ENCODE measurements at regions of chr20 and their contacts with region 1.

Region 1: GRCh38 chr20:38221119-38221589 is 39.4 kb downstream of the KIAA1755 start:
- DNase-seq: peak; percentile 88
- CTCF ChIP-seq: peak; percentile 91

Region 2: GRCh38 chr20:37901654-37902503 is 319.3 kb before region 1 on chr20:
- CTCF ChIA-PET with region 1: interaction called, 12 read pairs
- POLR2A ChIA-PET with region 1: no interaction called
- DNase-seq: peak; percentile 83
- CTCF ChIP-seq: peak; percentile 41

Region 3: DNA sequence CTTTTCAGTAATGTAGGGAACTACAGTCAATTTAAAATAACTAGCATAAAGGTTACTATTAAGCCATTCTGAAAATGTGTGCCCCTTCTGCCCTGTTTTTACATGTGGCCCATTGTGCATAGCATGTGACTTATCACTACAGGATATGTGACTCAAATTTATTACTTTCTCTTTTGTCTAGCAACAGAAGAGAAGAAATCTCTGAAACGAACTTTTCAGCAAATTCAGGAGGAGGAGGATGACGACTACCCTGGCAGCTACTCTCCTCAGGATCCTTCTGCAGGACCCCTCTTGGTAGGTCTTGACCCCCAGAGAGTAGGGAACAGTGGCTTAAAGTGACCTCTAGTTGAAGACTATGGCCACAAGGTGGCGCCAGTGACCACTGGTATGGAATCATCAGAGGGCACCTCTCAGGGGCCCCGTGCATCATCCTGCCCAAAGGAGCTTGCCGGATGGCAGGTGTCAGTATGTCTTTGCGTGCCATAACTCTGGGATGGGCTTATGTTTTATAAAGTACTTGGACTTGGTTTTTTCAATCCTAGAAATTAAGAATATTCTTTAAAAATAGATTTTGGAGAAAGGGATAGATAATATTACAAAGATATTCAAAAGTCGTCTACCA is 163.7 kb before region 1 on chr20:
- CTCF ChIA-PET with region 1: interaction called, 302 read pairs
- POLR2A ChIA-PET with region 1: interaction called, 3 read pairs
- DNase-seq: peak; percentile 74
- CTCF ChIP-seq: peak; percentile 79

Region 4: DNA sequence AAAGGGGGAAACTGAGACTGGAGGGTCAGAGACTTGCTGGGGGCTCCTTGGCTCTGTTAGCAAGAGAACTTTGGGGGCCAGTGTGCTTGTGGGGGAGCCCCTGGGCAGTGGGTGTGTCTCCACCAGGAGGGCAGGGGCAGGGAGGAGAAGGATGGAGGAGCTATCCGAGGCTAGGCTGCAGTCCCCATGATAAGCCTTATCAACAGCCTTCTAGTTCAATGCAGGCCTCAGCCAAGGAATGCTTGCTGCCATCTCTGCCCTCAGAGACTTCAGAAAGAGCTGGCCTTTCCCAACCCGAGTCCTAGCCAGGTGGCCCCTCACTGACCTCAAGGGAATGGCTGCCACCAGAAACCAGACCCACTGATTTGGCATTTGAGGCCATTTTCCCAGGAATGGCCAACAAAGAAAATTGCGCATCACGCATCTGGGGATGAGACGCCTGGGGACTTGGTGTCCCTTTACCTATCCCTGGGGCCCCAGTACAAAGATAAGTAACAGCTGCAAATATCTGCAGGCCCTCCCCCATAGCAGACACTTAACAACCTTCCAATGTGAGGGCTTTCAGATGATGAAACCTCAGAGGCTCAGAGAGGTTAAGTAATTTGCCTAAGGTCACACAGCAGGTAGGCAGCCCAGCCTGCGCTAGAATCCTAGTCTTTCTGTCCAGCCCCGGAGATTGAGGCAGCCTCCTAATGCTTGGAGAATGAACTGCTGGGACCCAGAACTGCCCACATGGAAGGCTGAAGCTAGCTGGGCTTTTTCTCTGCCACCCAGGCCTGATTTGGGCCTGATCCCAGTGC is 61.0 kb before region 1 on chr20:
- CTCF ChIA-PET with region 1: interaction called, 11 read pairs
- POLR2A ChIA-PET with region 1: no interaction called
- DNase-seq: no peak
- CTCF ChIP-seq: no peak

Region 5: GRCh38 chr20:38181207-38181693 is 39.9 kb before region 1 on chr20:
- CTCF ChIA-PET with region 1: interaction called, 26 read pairs
- POLR2A ChIA-PET with region 1: interaction called, 8 read pairs
- DNase-seq: peak; percentile 63
- CTCF ChIP-seq: no peak

Region 6: GRCh38 chr20:38210741-38211140 is 10.4 kb before region 1 on chr20:
- CTCF ChIA-PET with region 1: interaction called, 86 read pairs
- POLR2A ChIA-PET with region 1: no interaction called
- DNase-seq: no peak
- CTCF ChIP-seq: no peak

Region 7: GRCh38 chr20:38590676-38591471 is 369.7 kb after region 1 on chr20:
- CTCF ChIA-PET with region 1: no interaction called
- POLR2A ChIA-PET with region 1: no interaction called
- DNase-seq: peak; percentile 5
- CTCF ChIP-seq: no peak